ENCODE measurements at regions of chr7 and their contacts with region 1.

Region 1: GRCh38 chr7:36115448-36116321 is 37.4 kb upstream of the EEPD1 start:
- DNase-seq: peak; percentile 60
- H3K4me3 Mint-ChIP-seq: peak overlapping the region; percentile 32
- H3K27ac Mint-ChIP-seq: peak overlapping the region; percentile 61
- H3K4me1 Mint-ChIP-seq: peaks cover 33% of the 10 kb centered on the region
- H3K27me3 Mint-ChIP-seq: peaks cover 26% of the 10 kb centered on the region

Region 2: GRCh38 chr7:35723011-35723410 is 392.7 kb before region 1 on chr7:
- intact Hi-C with region 1: loop called (anchors 5 kb)
- DNase-seq: no peak
- H3K4me3 Mint-ChIP-seq: peak overlapping the region; percentile 24
- H3K27ac Mint-ChIP-seq: peak overlapping the region; percentile 56
- H3K4me1 Mint-ChIP-seq: peaks cover 49% of the 10 kb centered on the region
- H3K27me3 Mint-ChIP-seq: peaks cover 6% of the 10 kb centered on the region

Region 3: DNA sequence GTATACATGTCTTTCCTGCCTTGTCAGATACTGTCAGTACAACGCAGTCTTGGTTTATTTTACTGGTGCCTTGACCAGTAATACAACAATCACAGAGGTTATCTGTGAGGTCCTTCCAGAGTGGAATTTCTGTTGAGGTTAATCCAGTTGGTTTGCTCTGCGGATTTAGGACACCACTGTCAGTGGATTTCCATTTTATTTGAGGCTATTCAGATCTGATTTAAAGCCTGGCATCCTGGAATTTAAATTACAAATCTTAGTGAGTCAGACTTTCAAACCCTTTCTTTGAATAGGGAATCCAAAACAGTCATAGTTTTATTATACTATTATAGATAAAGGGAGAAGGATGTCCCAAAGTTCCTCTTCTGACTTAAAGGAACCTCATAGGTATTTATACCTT is 314.5 kb after region 1 on chr7:
- intact Hi-C with region 1: no loop called
- DNase-seq: no peak
- H3K4me3 Mint-ChIP-seq: no peak overlapping the region
- H3K27ac Mint-ChIP-seq: no peak overlapping the region
- H3K4me1 Mint-ChIP-seq: no peaks in the 10 kb centered on the region
- H3K27me3 Mint-ChIP-seq: no peaks in the 10 kb centered on the region

Region 4: GRCh38 chr7:37160656-37161055 is 1045.0 kb after region 1 on chr7:
- intact Hi-C with region 1: no loop called
- DNase-seq: no peak
- H3K4me3 Mint-ChIP-seq: no peak overlapping the region
- H3K27ac Mint-ChIP-seq: no peak overlapping the region
- H3K4me1 Mint-ChIP-seq: peaks cover 8% of the 10 kb centered on the region
- H3K27me3 Mint-ChIP-seq: no peaks in the 10 kb centered on the region